Adrenal gland (tissue), 19 donors: ENCODE measurements at regions of chr14 and their contacts with region 1.

Region 1: DNA sequence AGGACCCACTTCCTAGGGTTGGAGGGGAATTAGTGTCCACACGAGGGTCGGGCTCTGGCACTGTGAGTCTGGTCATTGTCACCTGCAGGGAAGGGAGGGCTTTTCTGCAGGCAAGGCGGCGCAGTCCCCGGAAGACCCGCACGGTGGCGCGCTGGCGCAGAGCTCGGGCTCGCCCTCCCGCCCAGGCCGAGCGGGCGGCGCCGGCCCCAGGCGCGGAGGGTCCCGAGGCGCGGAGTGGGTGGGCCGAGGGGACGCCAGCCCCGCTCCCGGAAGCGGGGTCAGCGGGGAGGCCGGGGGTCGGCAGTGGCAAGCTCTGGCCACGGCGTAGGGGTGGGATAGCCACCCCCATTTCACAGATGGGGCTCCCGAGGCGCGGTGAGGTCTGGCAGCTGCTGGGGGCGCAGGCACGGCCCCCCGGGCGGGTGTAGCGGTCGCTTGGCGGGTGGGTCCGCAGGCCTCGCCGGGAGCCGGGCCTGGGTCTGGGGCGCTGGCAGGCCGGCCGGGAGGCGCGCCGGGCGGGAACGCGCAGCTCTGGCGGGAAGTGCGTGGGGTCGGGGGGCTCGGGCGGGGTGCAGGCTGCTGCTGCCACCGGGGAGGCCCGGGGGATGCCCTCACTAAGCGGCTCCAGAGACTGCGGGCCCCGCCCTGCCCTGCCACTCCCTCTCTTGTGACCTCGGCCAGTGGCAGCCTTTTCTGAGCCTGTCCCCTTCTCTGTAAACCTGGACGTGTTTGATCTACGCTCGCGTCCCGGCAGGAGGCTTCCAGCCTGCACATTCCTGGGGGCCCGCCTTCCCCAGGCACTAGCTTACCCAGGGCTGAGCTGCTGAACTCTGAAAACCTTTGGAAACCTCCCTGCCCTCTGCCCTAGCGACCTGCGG is 46.1 kb downstream of the CYP46A1 start:
- DNase-seq: peak in 6 of 7 donors; percentile 70 to 82 (median 78)
- H3K4me3 ChIP-seq: peak overlapping the region in 1 of 4 donors; percentile 75
- H3K27ac ChIP-seq: peak overlapping the region in 1 of 5 donors; percentile 63
- H3K4me1 ChIP-seq: peaks cover 22 to 30% of the 10 kb centered on the region in 2 donors
- H3K27me3 ChIP-seq: peaks cover 7% of the 10 kb centered on the region
- CTCF ChIP-seq: peak; percentile 40 to 96 (median 76)
- POLR2A ChIP-seq: no peak

Region 2: DNA sequence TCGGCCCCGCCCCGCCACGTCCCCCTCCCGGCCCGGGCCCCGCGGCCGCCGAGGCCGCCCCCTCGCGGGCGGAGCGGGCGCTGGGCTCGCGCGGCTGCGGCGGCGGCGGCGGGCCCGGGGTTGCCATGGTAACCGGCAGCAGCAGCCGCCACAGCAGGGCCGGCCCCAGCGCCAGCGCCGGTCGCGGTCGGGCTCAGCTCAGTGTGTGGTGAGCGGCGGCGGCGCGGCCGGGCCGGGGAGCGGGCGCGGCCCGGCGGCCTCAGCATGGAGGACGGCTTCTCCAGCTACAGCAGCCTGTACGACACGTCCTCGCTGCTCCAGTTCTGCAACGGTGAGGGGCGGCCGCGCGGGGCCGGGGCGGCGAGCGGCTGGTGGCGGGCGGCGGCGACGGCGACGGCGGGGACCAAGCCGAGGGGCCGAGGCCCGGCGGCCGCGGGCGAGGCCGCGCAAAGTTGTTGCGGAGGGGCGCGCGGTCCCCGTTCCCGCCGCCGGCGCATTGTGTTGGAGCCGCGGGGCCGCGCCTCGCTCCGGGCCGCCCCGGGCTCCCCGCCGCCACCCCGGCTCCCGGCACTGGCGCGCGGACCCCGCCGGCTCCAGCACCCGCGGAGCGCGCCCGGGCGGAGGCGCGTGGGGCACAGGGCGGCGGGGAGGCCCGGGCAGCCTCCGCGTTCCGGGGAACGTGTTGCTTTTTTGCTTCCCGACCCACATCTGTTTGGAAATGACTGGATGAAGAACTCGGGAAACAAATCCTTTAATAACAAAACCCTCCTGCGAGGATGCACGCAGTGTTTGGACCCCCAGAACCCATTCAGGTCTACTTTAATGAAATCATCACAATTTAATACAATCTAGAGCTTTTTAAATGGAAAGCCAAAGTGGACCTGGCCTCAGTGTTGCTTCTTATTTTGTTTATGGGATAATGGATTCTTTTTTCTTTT is 63.3 kb after region 1 on chr14 and contains the start of gene EML1:
- intact Hi-C with region 1: loop called (anchors 5 kb)
- DNase-seq: peak; percentile 82 to 90 (median 87)
- H3K4me3 ChIP-seq: peak within 1 kb of the TSS in 1 of 4 donors; percentile 69
- H3K27ac ChIP-seq: peak within 1 kb of the TSS in 4 of 5 donors; percentile 37 to 90 (median 67)
- H3K4me1 ChIP-seq: peaks cover 6 to 29% of the 10 kb centered on the region in 2 donors
- H3K27me3 ChIP-seq: no peaks in the 10 kb centered on the region
- CTCF ChIP-seq: no peak
- POLR2A ChIP-seq: peak in 1 of 2 donors; percentile 57
- total RNA-seq, gene EML1: 10.3 to 59.5 (median 22.2) TPM

Region 3: GRCh38 chr14:99821519-99822508 is 91.6 kb after region 1 on chr14:
- intact Hi-C with region 1: no loop called
- DNase-seq: peak in 1 of 7 donors; percentile 46
- H3K4me3 ChIP-seq: no peak overlapping the region
- H3K27ac ChIP-seq: no peak overlapping the region
- H3K4me1 ChIP-seq: no peaks in the 10 kb centered on the region
- H3K27me3 ChIP-seq: no peaks in the 10 kb centered on the region
- CTCF ChIP-seq: no peak
- POLR2A ChIP-seq: no peak

Region 4: GRCh38 chr14:99936747-99937474 is 206.7 kb after region 1 on chr14:
- intact Hi-C with region 1: no loop called
- DNase-seq: no peak
- H3K4me3 ChIP-seq: no peak overlapping the region
- H3K27ac ChIP-seq: no peak overlapping the region
- H3K4me1 ChIP-seq: no peaks in the 10 kb centered on the region
- H3K27me3 ChIP-seq: no peaks in the 10 kb centered on the region
- CTCF ChIP-seq: no peak
- POLR2A ChIP-seq: no peak